Heart left ventricle (tissue), 16 donors: ENCODE measurements at regions of chr2 and their contacts with region 1.

Region 1: DNA sequence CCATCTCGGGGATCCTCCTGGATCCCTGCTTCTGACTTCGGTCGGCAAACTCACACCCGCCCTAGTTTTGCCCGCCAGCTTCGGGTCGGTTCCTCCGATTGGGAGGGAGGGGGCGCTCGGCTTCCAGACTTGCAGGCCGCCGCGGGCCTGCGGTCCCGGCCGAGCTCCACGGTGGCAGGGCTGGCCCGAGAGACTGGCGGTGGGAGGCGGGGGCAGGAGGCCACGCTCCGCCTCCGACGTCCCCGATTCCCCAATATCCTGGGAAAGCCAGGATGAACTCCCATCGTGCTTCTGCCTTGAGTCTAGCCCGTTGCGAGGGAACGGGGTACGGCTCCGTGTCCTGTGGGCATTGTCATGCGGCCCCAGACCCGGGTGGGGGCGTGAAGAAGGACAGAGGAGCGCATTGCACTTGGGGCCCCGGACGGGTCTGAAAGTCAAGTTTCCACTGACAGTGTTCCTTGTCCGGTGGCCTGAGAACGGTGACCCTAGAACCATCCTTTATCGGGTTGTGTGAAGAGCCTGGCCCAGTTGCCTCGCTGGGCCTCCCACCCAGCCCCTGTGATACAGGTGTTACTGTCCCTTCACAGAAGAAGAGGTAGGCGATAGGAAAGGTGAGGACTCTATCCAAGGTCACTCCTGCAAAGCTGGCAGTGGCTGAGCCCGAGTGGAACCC is 2.4 kb upstream of the INHBB start:
- DNase-seq: peak; percentile 83 to 90 (median 85)
- ATAC-seq: peak; percentile 75 to 92 (median 90)
- H3K4me3 ChIP-seq: peak overlapping the region in 10 of 12 donors; percentile 8 to 73 (median 58)
- H3K27ac ChIP-seq: peak overlapping the region in 4 of 12 donors; percentile 55 to 71 (median 65)
- H3K4me1 ChIP-seq: peaks cover 0 to 51% (median 27%) of the 10 kb centered on the region in 12 donors
- H3K27me3 ChIP-seq: peaks cover 21 to 81% (median 52%) of the 10 kb centered on the region in 9 donors
- CTCF ChIP-seq: peak; percentile 68 to 95 (median 87)
- POLR2A ChIP-seq: no peak

Region 2: GRCh38 chr2:120503793-120504571 is 160.4 kb after region 1 on chr2:
- intact Hi-C with region 1: loop called in 5 of 10 experiments (anchors 5 to 10 kb)
- DNase-seq: peak; percentile 55 to 92 (median 82)
- ATAC-seq: peak; percentile 91 to 96 (median 92)
- H3K4me3 ChIP-seq: no peak overlapping the region
- H3K27ac ChIP-seq: peak overlapping the region in 11 of 12 donors; percentile 11 to 87 (median 72)
- H3K4me1 ChIP-seq: peaks cover 0 to 22% (median 8%) of the 10 kb centered on the region in 12 donors
- H3K27me3 ChIP-seq: no peaks in the 10 kb centered on the region
- CTCF ChIP-seq: peak in 4 of 12 donors; percentile 8 to 25 (median 16)
- POLR2A ChIP-seq: peak in 1 of 2 donors; percentile 14

Region 3: GRCh38 chr2:120552800-120553481 is 209.4 kb after region 1 on chr2:
- intact Hi-C with region 1: loop called in 9 of 10 experiments (anchors 2 to 10 kb)
- DNase-seq: peak; percentile 92 to 95 (median 93)
- ATAC-seq: peak; percentile 91 to 96 (median 92)
- H3K4me3 ChIP-seq: peak overlapping the region in 2 of 12 donors; percentile 5 to 9
- H3K27ac ChIP-seq: peak overlapping the region in 10 of 12 donors; percentile 37 to 81 (median 64)
- H3K4me1 ChIP-seq: peaks cover 9 to 43% (median 37%) of the 10 kb centered on the region in 12 donors
- H3K27me3 ChIP-seq: no peaks in the 10 kb centered on the region
- CTCF ChIP-seq: peak; percentile 57 to 93 (median 82)
- POLR2A ChIP-seq: no peak

Region 4: GRCh38 chr2:120589771-120590608 is 246.4 kb after region 1 on chr2:
- intact Hi-C with region 1: loop called in 1 of 10 experiments (anchors 10 kb)
- DNase-seq: no peak
- ATAC-seq: peak in 1 of 4 donors; percentile 20
- H3K4me3 ChIP-seq: no peak overlapping the region
- H3K27ac ChIP-seq: peak overlapping the region in 1 of 12 donors; percentile 40
- H3K4me1 ChIP-seq: peaks cover 0 to 15% (median 0%) of the 10 kb centered on the region in 12 donors
- H3K27me3 ChIP-seq: peaks cover 0 to 32% (median 14%) of the 10 kb centered on the region in 9 donors
- CTCF ChIP-seq: no peak
- POLR2A ChIP-seq: no peak

Region 5: DNA sequence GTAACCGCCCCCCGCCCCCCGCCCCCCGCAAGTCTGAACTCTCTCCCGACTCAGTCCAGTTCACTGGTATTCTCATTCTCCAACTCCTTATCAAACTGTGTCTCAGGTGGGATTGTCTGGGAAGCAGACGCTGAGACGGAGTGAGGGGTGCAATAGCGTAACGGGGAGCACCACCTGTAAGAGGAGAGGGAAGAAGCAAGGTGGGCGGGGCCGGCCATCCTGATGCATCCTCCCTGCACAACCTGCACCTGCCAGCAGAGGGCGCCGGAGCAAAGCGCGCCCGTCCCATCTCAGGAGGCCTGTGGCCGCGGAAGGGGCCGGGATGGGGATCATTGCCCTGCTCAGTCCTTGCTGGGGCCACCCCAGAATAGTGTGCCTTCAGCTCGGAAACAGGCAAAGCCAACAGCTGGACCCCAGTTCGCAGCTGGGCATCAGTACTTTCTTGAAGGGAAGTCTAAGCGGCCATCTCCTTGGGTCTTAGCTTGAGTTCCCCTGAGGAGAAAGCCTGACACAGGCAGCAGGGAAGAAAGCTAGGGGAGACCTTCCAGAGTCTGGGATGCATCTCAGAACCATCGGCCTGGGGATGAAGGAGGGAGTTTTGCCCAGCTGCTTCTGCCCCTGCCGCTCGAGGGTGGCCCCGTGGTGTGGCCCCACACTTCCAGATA is 733.4 kb after region 1 on chr2:
- intact Hi-C with region 1: loop called in 4 of 10 experiments (anchors 5 to 10 kb)
- DNase-seq: peak; percentile 45 to 80 (median 62)
- ATAC-seq: peak in 3 of 4 donors; percentile 36 to 68 (median 62)
- H3K4me3 ChIP-seq: no peak overlapping the region
- H3K27ac ChIP-seq: no peak overlapping the region
- H3K4me1 ChIP-seq: peaks cover 0 to 8% (median 0%) of the 10 kb centered on the region in 12 donors
- H3K27me3 ChIP-seq: peaks cover 0 to 21% (median 18%) of the 10 kb centered on the region in 9 donors
- CTCF ChIP-seq: peak; percentile 67 to 89 (median 80)
- POLR2A ChIP-seq: no peak